ENCODE measurements at regions of chr12 and their contacts with region 1.

Region 1: GRCh38 chr12:95217377-95218149 is at the starts of genes FGD6 and VEZT:
- DNase-seq: peak; percentile 92
- ATAC-seq: peak; percentile 92
- H3K4me3 Mint-ChIP-seq: peak within 1 kb of the TSS; percentile 96
- H3K27ac Mint-ChIP-seq: peak within 1 kb of the TSS; percentile 95
- H3K4me1 Mint-ChIP-seq: peaks cover 42% of the 10 kb centered on the region
- H3K27me3 Mint-ChIP-seq: no peaks in the 10 kb centered on the region
- CTCF ChIP-seq: no peak
- total RNA-seq, gene FGD6: 3.7 and 5.4 TPM in 2 replicates
- total RNA-seq, gene VEZT: 47.2 and 58.7 TPM in 2 replicates

Region 2: GRCh38 chr12:94149119-94149780 is 1068.3 kb before region 1 on chr12:
- CTCF ChIA-PET with region 1: no interaction called
- POLR2A ChIA-PET with region 1: no interaction called
- intact Hi-C with region 1: loop called (anchors 10 kb)
- DNase-seq: peak; percentile 71
- ATAC-seq: peak; percentile 29
- H3K4me3 Mint-ChIP-seq: peak overlapping the region; percentile 96
- H3K27ac Mint-ChIP-seq: peak overlapping the region; percentile 70
- H3K4me1 Mint-ChIP-seq: peaks cover 58% of the 10 kb centered on the region
- H3K27me3 Mint-ChIP-seq: no peaks in the 10 kb centered on the region
- CTCF ChIP-seq: no peak

Region 3: GRCh38 chr12:95003213-95003920 is 214.2 kb before region 1 on chr12 and contains the start of gene NDUFA12:
- CTCF ChIA-PET with region 1: no interaction called
- POLR2A ChIA-PET with region 1: interaction called, 3 read pairs
- intact Hi-C with region 1: loop called (anchors 1 kb)
- DNase-seq: peak; percentile 89
- ATAC-seq: peak; percentile 99
- H3K4me3 Mint-ChIP-seq: peak within 1 kb of the TSS; percentile 94
- H3K27ac Mint-ChIP-seq: peak within 1 kb of the TSS; percentile 90
- H3K4me1 Mint-ChIP-seq: peaks cover 35% of the 10 kb centered on the region
- H3K27me3 Mint-ChIP-seq: no peaks in the 10 kb centered on the region
- CTCF ChIP-seq: no peak
- total RNA-seq, gene NDUFA12: 80.2 and 81.7 TPM in 2 replicates

Region 4: GRCh38 chr12:95117178-95117599 is 100.4 kb before region 1 on chr12:
- CTCF ChIA-PET with region 1: interaction called, 9 read pairs
- POLR2A ChIA-PET with region 1: interaction called, 4 read pairs
- intact Hi-C with region 1: loop called (anchors 1 kb)
- DNase-seq: no peak
- ATAC-seq: peak; percentile 84
- H3K4me3 Mint-ChIP-seq: no peak overlapping the region
- H3K27ac Mint-ChIP-seq: no peak overlapping the region
- H3K4me1 Mint-ChIP-seq: peaks cover 3% of the 10 kb centered on the region
- H3K27me3 Mint-ChIP-seq: no peaks in the 10 kb centered on the region
- CTCF ChIP-seq: no peak

Region 5: GRCh38 chr12:95326445-95326844 is 108.9 kb after region 1 on chr12:
- CTCF ChIA-PET with region 1: no interaction called
- POLR2A ChIA-PET with region 1: no interaction called
- intact Hi-C with region 1: no loop called
- DNase-seq: no peak
- ATAC-seq: no peak
- H3K4me3 Mint-ChIP-seq: no peak overlapping the region
- H3K27ac Mint-ChIP-seq: no peak overlapping the region
- H3K4me1 Mint-ChIP-seq: no peaks in the 10 kb centered on the region
- H3K27me3 Mint-ChIP-seq: peaks cover 2% of the 10 kb centered on the region
- CTCF ChIP-seq: no peak

Region 6: DNA sequence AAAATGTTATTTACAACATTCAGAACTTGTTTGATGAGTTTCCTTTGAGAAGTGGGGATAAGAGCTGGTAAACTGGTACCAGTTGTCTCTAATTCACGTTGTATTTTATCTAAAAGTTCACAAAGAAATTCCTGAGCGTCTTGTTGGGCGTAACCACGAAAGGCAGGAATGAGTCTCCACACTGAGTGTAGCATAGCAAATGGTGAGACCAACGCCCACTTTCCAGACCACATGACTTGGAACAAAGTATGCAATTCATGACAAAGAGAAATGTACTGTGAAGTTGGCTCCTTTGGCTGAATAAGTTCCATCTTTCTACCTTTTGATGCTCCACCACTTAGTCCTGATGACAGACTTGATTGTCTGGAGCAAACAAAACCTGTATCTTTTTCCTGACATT is 315.3 kb after region 1 on chr12:
- CTCF ChIA-PET with region 1: interaction called, 5 read pairs
- POLR2A ChIA-PET with region 1: no interaction called
- intact Hi-C with region 1: loop called (anchors 2 kb)
- DNase-seq: no peak
- ATAC-seq: no peak
- H3K4me3 Mint-ChIP-seq: no peak overlapping the region
- H3K27ac Mint-ChIP-seq: no peak overlapping the region
- H3K4me1 Mint-ChIP-seq: no peaks in the 10 kb centered on the region
- H3K27me3 Mint-ChIP-seq: no peaks in the 10 kb centered on the region
- CTCF ChIP-seq: no peak

Region 7: GRCh38 chr12:95674631-95675030 is 457.1 kb after region 1 on chr12:
- CTCF ChIA-PET with region 1: no interaction called
- POLR2A ChIA-PET with region 1: no interaction called
- intact Hi-C with region 1: no loop called
- DNase-seq: no peak
- ATAC-seq: no peak
- H3K4me3 Mint-ChIP-seq: no peak overlapping the region
- H3K27ac Mint-ChIP-seq: no peak overlapping the region
- H3K4me1 Mint-ChIP-seq: no peaks in the 10 kb centered on the region
- H3K27me3 Mint-ChIP-seq: peaks cover 7% of the 10 kb centered on the region
- CTCF ChIP-seq: no peak

Region 8: DNA sequence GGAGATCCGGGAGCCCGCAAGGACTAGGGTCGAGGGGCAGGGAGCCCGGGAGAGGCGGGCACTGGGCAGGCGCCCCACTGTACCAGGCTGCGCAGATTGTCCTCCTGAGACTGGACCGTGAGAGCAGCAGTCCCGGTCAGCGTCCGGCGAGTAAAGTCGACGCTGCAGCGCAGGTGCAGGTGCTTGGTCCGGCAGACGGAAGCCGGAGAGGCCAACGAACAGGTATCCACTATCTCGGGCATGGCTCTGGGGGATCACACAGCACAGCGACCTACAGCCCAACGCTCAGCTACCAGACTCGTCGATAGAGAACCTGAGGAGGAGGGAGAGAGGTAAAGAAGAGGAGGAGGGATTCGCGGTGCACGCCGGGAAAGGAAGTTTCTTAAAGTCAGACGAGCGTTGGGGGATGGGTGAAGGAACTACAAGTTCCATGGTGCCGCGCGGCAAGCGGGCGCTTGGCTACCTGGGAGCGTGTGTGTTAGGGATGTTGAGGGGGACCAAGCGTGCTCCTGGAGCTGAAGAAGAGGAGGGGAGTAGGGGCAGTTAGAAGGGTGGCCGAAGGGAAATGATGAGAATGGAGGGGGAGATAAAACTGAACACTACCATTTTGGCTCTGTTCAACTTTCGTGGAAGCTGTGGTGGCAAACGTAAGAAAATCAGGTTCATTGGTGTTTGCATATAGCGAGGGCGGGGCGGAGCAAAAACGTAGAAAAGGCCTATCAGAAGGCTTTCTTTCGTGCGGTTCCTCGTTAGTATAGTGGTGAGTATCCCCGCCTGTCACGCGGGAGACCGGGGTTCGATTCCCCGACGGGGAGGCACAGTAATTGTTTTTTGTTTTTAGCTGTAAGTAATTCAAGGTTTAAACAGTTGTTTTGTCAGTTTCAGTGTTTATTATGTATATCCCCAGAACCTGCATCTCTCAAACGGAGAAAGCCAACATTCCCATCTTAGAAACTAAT is 818.0 kb after region 1 on chr12 and contains the start of gene LTA4H:
- CTCF ChIA-PET with region 1: no interaction called
- POLR2A ChIA-PET with region 1: interaction called, 3 read pairs
- intact Hi-C with region 1: loop called (anchors 1 kb)
- DNase-seq: peak; percentile 88
- ATAC-seq: peak; percentile 86
- H3K4me3 Mint-ChIP-seq: no peak within 1 kb of the TSS
- H3K27ac Mint-ChIP-seq: no peak within 1 kb of the TSS
- H3K4me1 Mint-ChIP-seq: peaks cover 26% of the 10 kb centered on the region
- H3K27me3 Mint-ChIP-seq: no peaks in the 10 kb centered on the region
- CTCF ChIP-seq: no peak
- total RNA-seq, gene LTA4H: 119 and 124 TPM in 2 replicates